Gastrocnemius medialis (tissue), 4 donors: ENCODE measurements at regions of chr10 and their contacts with region 1.

Region 1: DNA sequence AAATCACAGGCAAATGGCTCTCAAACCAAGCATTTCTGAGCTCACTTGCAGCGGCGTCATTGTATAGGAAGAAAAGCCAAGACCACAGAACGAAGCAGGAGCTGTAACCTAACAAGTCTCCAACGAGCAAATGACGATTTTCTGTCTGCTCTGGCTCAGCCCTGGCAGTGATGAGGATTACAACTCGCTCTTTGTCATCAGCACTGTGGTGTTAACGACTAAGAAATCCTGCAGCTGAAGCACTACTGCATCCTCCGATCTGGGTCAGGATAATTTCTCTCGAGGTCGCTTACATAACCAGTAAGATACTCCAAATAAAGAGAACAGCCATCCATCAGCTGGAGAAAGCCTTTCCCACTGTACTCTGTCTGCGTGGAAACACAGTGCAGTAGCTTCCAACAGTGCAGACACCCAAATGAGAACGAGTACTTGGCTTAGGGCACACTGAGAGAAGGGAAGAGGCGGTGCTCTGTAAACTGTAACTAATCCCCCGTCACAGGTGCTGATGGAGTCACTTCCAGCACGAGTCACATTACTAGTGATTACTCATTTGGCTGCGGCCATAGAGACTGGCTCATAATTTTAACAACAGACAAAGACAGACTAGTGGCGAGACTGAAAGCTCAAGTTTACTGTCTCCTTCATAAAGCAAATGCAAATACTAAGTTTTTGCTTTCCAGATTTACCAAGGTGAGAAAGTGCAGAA is 135.8 kb downstream of the NRBF2 start:
- DNase-seq: peak; percentile 95
- ATAC-seq: peak; percentile 98
- H3K4me3 ChIP-seq: peak overlapping the region; percentile 51 to 64 (median 54)
- H3K27ac ChIP-seq: peak overlapping the region; percentile 88 to 96 (median 90)
- H3K4me1 ChIP-seq: peaks cover 26% of the 10 kb centered on the region in 2 donors
- H3K27me3 ChIP-seq: no peaks in the 10 kb centered on the region
- CTCF ChIP-seq: peak; percentile 51 to 62 (median 55)
- POLR2A ChIP-seq: peak; percentile 82 to 94

Region 2: DNA sequence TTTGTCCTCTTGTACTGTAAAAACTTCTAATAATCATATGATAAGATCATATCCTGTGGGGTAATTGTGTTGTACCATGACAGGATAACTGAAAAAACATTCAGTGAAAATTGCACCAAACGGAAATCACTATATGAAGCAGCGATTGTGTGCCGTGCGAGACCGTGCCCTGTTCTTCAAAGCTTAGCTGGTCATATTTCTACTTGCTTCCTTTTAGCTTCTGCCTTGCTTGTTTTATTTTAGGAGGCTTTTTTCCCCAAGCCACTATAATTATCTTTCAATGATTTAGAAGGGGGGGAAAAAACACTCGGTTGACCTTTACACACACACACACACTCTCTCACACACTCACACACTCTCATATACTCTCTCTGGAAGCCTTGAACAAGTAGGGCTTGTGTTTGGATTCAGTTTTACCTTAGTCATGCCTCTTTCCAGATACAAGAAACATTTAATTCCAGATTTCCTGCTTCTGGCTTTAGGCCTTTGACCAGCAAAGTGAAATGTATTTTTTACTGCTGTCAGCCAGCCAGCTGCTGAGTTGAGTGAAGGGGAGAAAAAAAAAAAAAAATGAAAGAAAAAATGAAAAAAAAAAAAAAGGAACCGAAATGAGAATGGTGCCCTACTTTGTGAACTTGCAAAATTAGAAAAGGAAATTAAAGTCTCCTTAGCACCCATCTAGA is 1186.1 kb before region 1 on chr10:
- in situ Hi-C with region 1: loop called in 1 of 4 experiments (anchors 25 kb)
- intact Hi-C with region 1: no loop called
- DNase-seq: no peak
- ATAC-seq: peak in 1 of 2 donors; percentile 14
- H3K4me3 ChIP-seq: peak overlapping the region in 2 of 4 donors; percentile 6 to 7
- H3K27ac ChIP-seq: peak overlapping the region; percentile 95 to 99 (median 96)
- H3K4me1 ChIP-seq: peaks cover 64 to 70% of the 10 kb centered on the region in 2 donors
- H3K27me3 ChIP-seq: no peaks in the 10 kb centered on the region
- CTCF ChIP-seq: no peak
- POLR2A ChIP-seq: no peak

Region 3: DNA sequence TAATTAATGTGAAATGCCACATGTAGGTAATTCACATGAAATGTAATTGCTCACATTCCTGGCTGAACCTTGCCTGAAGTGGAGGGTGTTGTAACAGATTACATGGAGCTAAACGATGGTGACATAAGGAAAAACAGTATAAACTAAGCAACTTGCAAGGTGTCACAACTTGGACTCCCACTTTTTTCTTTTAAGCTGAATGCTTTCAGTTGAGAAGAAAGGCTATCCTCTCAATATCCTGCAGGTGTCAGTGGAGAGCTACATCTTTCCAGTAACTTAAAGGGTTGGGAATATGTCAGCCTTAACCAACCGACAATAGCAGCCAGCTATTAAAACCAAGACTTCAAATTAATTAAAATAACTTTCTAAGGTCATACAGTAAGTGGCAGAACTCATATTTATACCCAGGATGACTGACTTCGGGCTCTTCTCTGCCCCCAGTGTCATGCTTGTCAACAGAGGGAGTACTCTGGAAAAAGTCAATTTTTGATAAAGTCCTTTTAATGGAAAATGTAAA is 102.2 kb before region 1 on chr10:
- in situ Hi-C with region 1: no loop called
- intact Hi-C with region 1: loop called (anchors 5 kb)
- DNase-seq: no peak
- ATAC-seq: peak; percentile 77 to 81
- H3K4me3 ChIP-seq: no peak overlapping the region
- H3K27ac ChIP-seq: peak overlapping the region in 1 of 4 donors; percentile 29
- H3K4me1 ChIP-seq: peaks cover 0 to 11% of the 10 kb centered on the region in 2 donors
- H3K27me3 ChIP-seq: no peaks in the 10 kb centered on the region
- CTCF ChIP-seq: peak; percentile 67 to 85 (median 78)
- POLR2A ChIP-seq: no peak

Region 4: GRCh38 chr10:63206997-63207811 is 61.7 kb before region 1 on chr10:
- in situ Hi-C with region 1: no loop called
- intact Hi-C with region 1: no loop called
- DNase-seq: peak in 1 of 2 donors; percentile 11
- ATAC-seq: peak; percentile 35 to 62
- H3K4me3 ChIP-seq: peak overlapping the region in 2 of 4 donors; percentile 3 to 11
- H3K27ac ChIP-seq: peak overlapping the region; percentile 21 to 47 (median 38)
- H3K4me1 ChIP-seq: peaks cover 55 to 58% of the 10 kb centered on the region in 2 donors
- H3K27me3 ChIP-seq: no peaks in the 10 kb centered on the region
- CTCF ChIP-seq: no peak
- POLR2A ChIP-seq: no peak

Region 5: GRCh38 chr10:63465293-63466143 is 196.6 kb after region 1 on chr10 and contains the start of gene JMJD1C:
- in situ Hi-C with region 1: no loop called
- intact Hi-C with region 1: loop called (anchors 2 kb)
- DNase-seq: peak; percentile 48 to 78
- ATAC-seq: peak; percentile 84 to 88
- H3K4me3 ChIP-seq: peak within 1 kb of the TSS; percentile 82 to 95 (median 92)
- H3K27ac ChIP-seq: peak within 1 kb of the TSS; percentile 93 to 95 (median 94)
- H3K4me1 ChIP-seq: peaks cover 26% of the 10 kb centered on the region in 2 donors
- H3K27me3 ChIP-seq: no peaks in the 10 kb centered on the region
- CTCF ChIP-seq: peak in 2 of 5 experiments; percentile 13 to 20
- POLR2A ChIP-seq: peak; percentile 79 to 82
- total RNA-seq, gene JMJD1C: 22.5 to 74.1 (median 46.9) TPM

Region 6: GRCh38 chr10:63711867-63712716 is 443.1 kb after region 1 on chr10:
- in situ Hi-C with region 1: no loop called
- intact Hi-C with region 1: loop called (anchors 2 kb)
- DNase-seq: peak; percentile 94 to 97
- ATAC-seq: peak; percentile 84
- H3K4me3 ChIP-seq: no peak overlapping the region
- H3K27ac ChIP-seq: peak overlapping the region; percentile 81 to 88 (median 85)
- H3K4me1 ChIP-seq: peaks cover 34 to 49% of the 10 kb centered on the region in 2 donors
- H3K27me3 ChIP-seq: no peaks in the 10 kb centered on the region
- CTCF ChIP-seq: no peak
- POLR2A ChIP-seq: no peak